Dendritic cell treated with granulocyte-macrophage colony-stimulating factor and Interleukin-4, amounts not matched to agents 40 ng/mL and 50 ng/mL, for 4 days (primary cell): ENCODE measurements at regions of chr9 and their contacts with region 1.

Region 1: GRCh38 chr9:107749787-107750444 is 260.3 kb upstream of the KLF4 start:
- H3K4me3 Mint-ChIP-seq: no peak overlapping the region
- H3K27ac Mint-ChIP-seq: peak overlapping the region; percentile 86
- H3K4me1 Mint-ChIP-seq: peaks cover 64% of the 10 kb centered on the region
- H3K27me3 Mint-ChIP-seq: no peaks in the 10 kb centered on the region

Region 2: GRCh38 chr9:107693625-107694326 is 56.1 kb before region 1 on chr9:
- intact Hi-C with region 1: loop called (anchors 10 kb)
- H3K4me3 Mint-ChIP-seq: no peak overlapping the region
- H3K27ac Mint-ChIP-seq: no peak overlapping the region
- H3K4me1 Mint-ChIP-seq: peaks cover 30% of the 10 kb centered on the region
- H3K27me3 Mint-ChIP-seq: no peaks in the 10 kb centered on the region

Region 3: DNA sequence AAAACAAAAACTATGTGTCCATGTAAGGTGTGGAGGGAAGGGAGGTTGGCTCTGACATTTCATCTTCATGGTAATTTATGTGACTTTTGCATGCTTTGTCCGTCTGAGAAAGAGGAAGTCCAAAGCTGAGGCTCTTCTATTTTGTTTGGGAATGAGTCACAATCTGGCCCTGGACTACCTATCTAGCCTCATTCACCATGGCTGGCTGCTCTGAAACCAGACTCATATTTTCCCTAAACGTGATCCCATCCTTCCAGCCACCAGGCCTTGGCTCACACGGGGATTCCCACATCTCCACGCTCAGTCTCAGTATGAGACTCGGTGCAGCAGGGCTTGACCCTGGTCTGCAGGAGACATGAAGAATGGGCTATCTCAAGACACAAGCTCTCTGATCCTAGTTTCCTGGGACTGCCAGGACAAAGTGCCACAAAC is 433.1 kb after region 1 on chr9:
- intact Hi-C with region 1: no loop called
- H3K4me3 Mint-ChIP-seq: no peak overlapping the region
- H3K27ac Mint-ChIP-seq: peak overlapping the region; percentile 37
- H3K4me1 Mint-ChIP-seq: peaks cover 58% of the 10 kb centered on the region
- H3K27me3 Mint-ChIP-seq: peaks cover 9% of the 10 kb centered on the region